ENCODE measurements at regions of chr3 and their contacts with region 1.

Region 1: GRCh38 chr3:108552267-108553159 is 36.7 kb downstream of the CIP2A start:
- DNase-seq: peak in 3 of 35 experiments; percentile 11 to 65 (median 14)
- ATAC-seq: peak in 1 of 4 experiments; percentile 40
- H3K4me3 ChIP-seq: no peak overlapping the region
- H3K4me3 Mint-ChIP-seq: no peak overlapping the region
- H3K27ac ChIP-seq: no peak overlapping the region
- H3K27ac Mint-ChIP-seq: no peak overlapping the region
- H3K4me1 ChIP-seq: no peaks in the 10 kb centered on the region
- H3K4me1 Mint-ChIP-seq: peaks cover 0 to 7% (median 1%) of the 10 kb centered on the region in 3 donors
- H3K27me3 ChIP-seq: no peaks in the 10 kb centered on the region
- H3K27me3 Mint-ChIP-seq: no peaks in the 10 kb centered on the region

Region 2: GRCh38 chr3:108352176-108352575 is 200.3 kb before region 1 on chr3:
- CTCF ChIA-PET with region 1: no interaction called
- POLR2A ChIA-PET with region 1: no interaction called
- DNase-seq: no peak
- ATAC-seq: no peak
- H3K4me3 ChIP-seq: no peak overlapping the region
- H3K4me3 Mint-ChIP-seq: no peak overlapping the region
- H3K27ac ChIP-seq: no peak overlapping the region
- H3K27ac Mint-ChIP-seq: no peak overlapping the region
- H3K4me1 ChIP-seq: no peaks in the 10 kb centered on the region
- H3K4me1 Mint-ChIP-seq: no peaks in the 10 kb centered on the region
- H3K27me3 ChIP-seq: no peaks in the 10 kb centered on the region
- H3K27me3 Mint-ChIP-seq: peaks cover 1 to 3% of the 10 kb centered on the region in 2 donors

Region 3: DNA sequence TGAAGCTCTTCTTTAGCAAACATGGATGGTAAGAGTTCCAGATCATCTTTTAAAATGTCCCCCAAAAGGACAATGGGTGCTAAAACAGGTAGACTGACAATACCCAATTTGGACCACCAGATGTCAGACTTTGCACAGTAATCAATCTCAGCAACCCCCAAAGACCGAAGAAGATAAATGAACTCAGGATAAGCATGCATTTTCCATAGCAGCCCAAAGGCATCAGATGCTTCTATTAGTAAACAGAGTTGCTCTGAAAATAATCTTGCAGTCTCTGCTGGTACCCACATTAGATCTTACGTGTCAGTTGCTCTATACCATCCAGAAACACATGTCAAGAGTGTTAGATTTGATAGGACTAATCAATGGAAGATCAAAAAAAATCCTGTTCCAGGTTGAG is 62.7 kb before region 1 on chr3:
- CTCF ChIA-PET with region 1: interaction called, 15 to 18 read pairs
- POLR2A ChIA-PET with region 1: no interaction called
- DNase-seq: peak in 28 of 35 experiments; percentile 3 to 83 (median 25)
- ATAC-seq: peak; percentile 54 to 80 (median 77)
- H3K4me3 ChIP-seq: no peak overlapping the region
- H3K4me3 Mint-ChIP-seq: no peak overlapping the region
- H3K27ac ChIP-seq: no peak overlapping the region
- H3K27ac Mint-ChIP-seq: no peak overlapping the region
- H3K4me1 ChIP-seq: no peaks in the 10 kb centered on the region
- H3K4me1 Mint-ChIP-seq: peaks cover 2 to 5% (median 3%) of the 10 kb centered on the region in 3 donors
- H3K27me3 ChIP-seq: no peaks in the 10 kb centered on the region
- H3K27me3 Mint-ChIP-seq: no peaks in the 10 kb centered on the region

Region 4: DNA sequence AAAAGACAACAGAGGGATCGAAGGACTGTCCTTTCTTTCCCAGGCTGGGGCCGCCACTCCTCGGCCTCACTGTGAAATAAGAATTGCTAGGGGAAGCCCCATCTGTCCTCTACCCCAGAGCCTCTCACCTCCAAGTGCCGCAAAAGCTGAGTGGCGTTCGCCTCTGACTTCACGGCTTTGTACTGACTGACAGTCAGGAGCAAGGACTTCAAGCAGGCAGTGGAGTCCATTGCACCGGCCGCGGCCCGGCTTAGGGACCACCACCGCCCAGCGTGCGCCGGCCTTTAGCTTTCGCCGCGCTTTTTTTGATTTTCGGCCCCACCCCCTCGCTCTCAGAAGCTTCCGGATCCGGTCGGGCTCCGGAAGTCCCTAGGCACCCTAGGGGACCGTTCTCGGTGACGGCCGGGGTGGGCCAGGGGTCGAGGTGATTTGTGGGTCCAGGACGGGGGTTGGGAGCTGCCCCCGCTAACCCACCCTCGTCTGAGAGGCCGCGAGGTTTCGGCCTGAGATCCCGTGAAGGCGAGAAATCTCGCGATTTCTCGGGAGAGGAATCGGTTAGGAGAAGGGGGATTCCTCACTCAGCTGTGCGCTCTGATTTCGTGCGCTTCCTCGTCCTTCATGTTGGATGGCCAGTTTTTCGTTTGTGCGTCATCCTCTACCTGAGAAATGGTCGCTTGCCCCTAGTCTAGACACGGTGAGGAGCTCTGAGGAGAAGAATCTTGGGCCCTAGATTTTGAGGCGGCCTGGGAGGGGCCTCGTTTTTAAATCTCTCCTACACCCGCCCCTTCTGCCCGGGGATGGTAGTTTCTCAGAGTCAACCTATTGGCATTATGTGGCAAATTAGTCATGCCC is 36.9 kb after region 1 on chr3 and contains the starts of genes CIP2A and DZIP3:
- CTCF ChIA-PET with region 1: interaction called, 10 read pairs
- POLR2A ChIA-PET with region 1: no interaction called
- DNase-seq: peak; percentile 68 to 93 (median 80)
- ATAC-seq: peak; percentile 79 to 82 (median 80)
- H3K4me3 ChIP-seq: peak within 1 kb of the TSS; percentile 69 to 84
- H3K4me3 Mint-ChIP-seq: peak within 1 kb of the TSS; percentile 94 to 99 (median 95)
- H3K27ac ChIP-seq: peak within 1 kb of the TSS; percentile 96
- H3K27ac Mint-ChIP-seq: peak within 1 kb of the TSS; percentile 98
- H3K4me1 ChIP-seq: peaks cover 3 to 15% of the 10 kb centered on the region in 2 experiments
- H3K4me1 Mint-ChIP-seq: peaks cover 31 to 40% (median 35%) of the 10 kb centered on the region in 3 donors
- H3K27me3 ChIP-seq: no peaks in the 10 kb centered on the region
- H3K27me3 Mint-ChIP-seq: no peaks in the 10 kb centered on the region
- total RNA-seq, gene CIP2A: 2.5 to 5.1 (median 4.5) TPM
- total RNA-seq, gene DZIP3: 9.3 to 19.9 (median 10.9) TPM

Region 5: DNA sequence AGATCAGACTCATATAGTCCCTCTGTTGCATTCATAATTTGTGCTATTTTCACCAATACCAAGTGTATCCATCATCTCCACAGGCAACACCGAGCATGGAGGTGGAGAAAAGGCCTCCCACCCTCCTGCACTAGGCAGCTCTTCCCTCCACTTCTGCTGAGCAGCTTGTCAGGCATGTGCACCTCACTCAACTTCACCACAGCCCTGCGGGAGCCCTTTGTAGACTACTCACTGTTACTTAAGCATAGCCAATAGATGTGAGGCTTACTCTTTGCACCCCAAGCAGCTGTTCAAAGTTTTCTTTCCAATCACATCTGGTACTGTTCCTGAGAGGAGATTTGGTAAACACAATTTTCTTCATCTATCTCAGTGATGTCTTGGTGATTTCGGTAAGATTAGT is 418.0 kb after region 1 on chr3:
- CTCF ChIA-PET with region 1: no interaction called
- POLR2A ChIA-PET with region 1: interaction called in 1 of 2 experiments, 12 read pairs
- DNase-seq: no peak
- ATAC-seq: peak in 1 of 4 experiments; percentile 6
- H3K4me3 ChIP-seq: no peak overlapping the region
- H3K4me3 Mint-ChIP-seq: no peak overlapping the region
- H3K27ac ChIP-seq: no peak overlapping the region
- H3K27ac Mint-ChIP-seq: no peak overlapping the region
- H3K4me1 ChIP-seq: no peaks in the 10 kb centered on the region
- H3K4me1 Mint-ChIP-seq: peaks cover 2 to 6% (median 3%) of the 10 kb centered on the region in 3 donors
- H3K27me3 ChIP-seq: no peaks in the 10 kb centered on the region
- H3K27me3 Mint-ChIP-seq: peaks cover 0 to 3% of the 10 kb centered on the region in 2 donors

Region 6: GRCh38 chr3:110106805-110107204 is 1554.3 kb after region 1 on chr3:
- CTCF ChIA-PET with region 1: no interaction called
- POLR2A ChIA-PET with region 1: no interaction called
- DNase-seq: no peak
- ATAC-seq: no peak
- H3K4me3 ChIP-seq: no peak overlapping the region
- H3K4me3 Mint-ChIP-seq: no peak overlapping the region
- H3K27ac ChIP-seq: no peak overlapping the region
- H3K27ac Mint-ChIP-seq: no peak overlapping the region
- H3K4me1 ChIP-seq: no peaks in the 10 kb centered on the region
- H3K4me1 Mint-ChIP-seq: no peaks in the 10 kb centered on the region
- H3K27me3 ChIP-seq: no peaks in the 10 kb centered on the region
- H3K27me3 Mint-ChIP-seq: no peaks in the 10 kb centered on the region